Posterior vena cava (tissue), 2 donors: ENCODE measurements at regions of chr4 and their contacts with region 1.

Region 1: DNA sequence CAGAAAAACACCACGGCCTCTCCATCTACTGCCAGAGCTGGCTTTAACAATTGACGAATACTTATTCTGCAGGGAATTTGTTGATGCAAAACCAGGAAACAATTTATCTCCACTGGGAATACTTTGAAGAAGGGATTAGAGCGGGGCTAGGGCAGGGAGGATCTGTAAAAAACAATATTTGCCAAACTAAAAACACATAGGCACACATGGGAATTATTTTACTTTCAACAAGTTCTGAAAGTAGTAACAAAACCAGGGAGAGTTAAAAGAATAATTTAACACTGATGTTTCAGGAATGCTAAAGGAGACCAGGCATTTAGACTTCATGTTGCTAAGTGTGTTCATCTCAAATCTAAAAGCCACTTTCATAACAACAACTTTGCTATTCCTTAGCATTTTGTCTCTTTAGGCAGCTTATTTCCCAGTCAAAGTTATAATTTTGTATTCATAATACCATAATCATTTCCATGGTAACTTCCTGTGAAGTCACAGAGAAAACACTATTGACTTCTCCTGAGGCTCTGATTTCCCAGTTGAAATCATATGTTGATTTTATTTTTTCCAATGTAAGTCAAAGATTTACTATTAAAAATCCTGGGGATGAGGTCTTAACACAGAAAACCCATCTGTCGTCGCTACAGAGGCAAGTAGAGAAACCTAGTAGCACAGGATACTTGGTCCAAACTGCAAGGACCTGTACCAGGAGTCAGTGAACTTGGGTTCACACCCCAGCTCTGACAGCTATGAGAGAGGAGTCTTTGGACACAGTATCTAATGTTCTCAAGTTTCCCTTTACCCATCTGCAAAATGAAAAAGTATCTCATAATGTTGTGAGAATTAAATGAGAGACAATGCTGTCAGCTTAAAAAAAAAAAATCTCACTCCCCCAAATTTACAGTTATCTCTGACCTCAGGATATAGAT is 69.3 kb downstream of the SH3RF1 start:
- DNase-seq: no peak

Region 2: DNA sequence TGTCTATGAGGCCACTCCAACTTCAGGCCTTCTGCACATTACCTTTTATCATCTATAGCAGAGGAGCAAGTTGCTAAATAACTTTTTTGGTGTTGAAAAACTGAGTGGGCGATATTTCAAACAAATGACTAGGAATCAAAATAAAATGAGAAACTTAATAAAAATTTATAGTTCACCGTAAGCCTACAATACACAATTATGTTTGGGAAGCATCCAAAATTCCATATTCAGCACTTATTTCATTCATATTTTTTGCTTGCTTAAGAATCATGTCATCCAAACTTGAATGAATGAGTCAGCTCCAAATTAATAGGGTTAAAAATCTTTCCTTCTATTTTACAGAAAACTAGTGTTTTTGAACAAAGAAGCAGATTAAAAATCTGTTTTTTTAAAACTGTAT is 49.8 kb before region 1 on chr4:
- intact Hi-C with region 1: loop called in 1 of 2 experiments (anchors 2 kb)
- DNase-seq: no peak

Region 3: GRCh38 chr4:169167958-169168858 is 33.3 kb before region 1 on chr4:
- intact Hi-C with region 1: loop called in 1 of 2 experiments (anchors 1 kb)
- DNase-seq: no peak